GM12878 (cell line): ENCODE measurements at regions of chr14 and their contacts with region 1.

Region 1: GRCh38 chr14:89973234-89973823 is 17.6 kb downstream of the TDP1 start:
- DNase-seq: peak; percentile 4
- ATAC-seq: peak; percentile 87
- H3K4me3 ChIP-seq: no peak overlapping the region
- H3K27ac ChIP-seq: no peak overlapping the region
- H3K4me1 ChIP-seq: no peaks in the 10 kb centered on the region
- H3K27me3 ChIP-seq: no peaks in the 10 kb centered on the region
- CTCF ChIP-seq: peak; percentile 71 to 87 (median 84)
- EP300 ChIP-seq: no peak
- POLR2A ChIP-seq: no peak
- RAD21 ChIP-seq: peak; percentile 59

Region 2: GRCh38 chr14:89954070-89955028 is 19.0 kb before region 1 on chr14 and contains the start of gene EFCAB11:
- CTCF ChIA-PET with region 1: interaction called, 65 read pairs
- POLR2A ChIA-PET with region 1: interaction called, 3 read pairs
- RAD21 ChIA-PET with region 1: interaction called, 4 read pairs
- SMC1A ChIA-PET with region 1: interaction called, 4 read pairs
- in situ Hi-C with region 1: no loop called
- intact Hi-C with region 1: no loop called
- DNase-seq: peak; percentile 93
- ATAC-seq: peak; percentile 92
- H3K4me3 ChIP-seq: peak within 1 kb of the TSS; percentile 65
- H3K27ac ChIP-seq: peak within 1 kb of the TSS; percentile 94
- H3K4me1 ChIP-seq: peaks cover 6% of the 10 kb centered on the region
- H3K27me3 ChIP-seq: no peaks in the 10 kb centered on the region
- CTCF ChIP-seq: peak; percentile 4 to 27 (median 5); a peak in 2 of 6 replicates
- EP300 ChIP-seq: no peak; a peak in 1 of 4 replicates
- POLR2A ChIP-seq: peak; percentile 84
- RAD21 ChIP-seq: no peak
- polyA plus RNA-seq, gene EFCAB11: 35.8 to 37.4 TPM

Region 3: DNA sequence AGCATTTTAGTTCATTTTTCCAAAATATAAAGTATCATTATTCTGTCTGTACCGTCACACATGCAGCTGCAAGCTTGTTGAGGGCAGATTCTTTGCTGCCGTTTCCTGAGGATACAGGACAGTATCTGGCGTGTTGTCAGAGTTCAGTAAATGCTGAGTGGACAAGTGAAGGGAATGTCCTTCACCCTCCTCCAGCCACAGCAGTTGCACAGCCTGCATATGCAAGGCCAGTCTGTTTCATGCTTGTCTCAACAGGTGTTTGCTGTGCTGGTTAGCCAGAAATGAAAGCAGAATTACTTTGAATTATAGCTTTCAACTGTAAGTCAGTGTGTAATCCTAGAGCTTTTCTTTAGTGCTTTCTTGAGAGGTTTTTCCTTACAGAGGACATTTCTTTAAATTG is 18.9 kb after region 1 on chr14:
- CTCF ChIA-PET with region 1: interaction called, 10 read pairs
- POLR2A ChIA-PET with region 1: interaction called, 4 read pairs
- RAD21 ChIA-PET with region 1: no interaction called
- SMC1A ChIA-PET with region 1: interaction called, 3 read pairs
- in situ Hi-C with region 1: no loop called
- intact Hi-C with region 1: no loop called
- DNase-seq: no peak
- ATAC-seq: no peak
- H3K4me3 ChIP-seq: no peak overlapping the region
- H3K27ac ChIP-seq: no peak overlapping the region
- H3K4me1 ChIP-seq: no peaks in the 10 kb centered on the region
- H3K27me3 ChIP-seq: no peaks in the 10 kb centered on the region
- CTCF ChIP-seq: no peak
- EP300 ChIP-seq: no peak
- POLR2A ChIP-seq: no peak
- RAD21 ChIP-seq: no peak

Region 4: GRCh38 chr14:90060312-90060964 is 87.1 kb after region 1 on chr14:
- CTCF ChIA-PET with region 1: interaction called, 6 read pairs
- POLR2A ChIA-PET with region 1: no interaction called
- RAD21 ChIA-PET with region 1: no interaction called
- SMC1A ChIA-PET with region 1: no interaction called
- in situ Hi-C with region 1: no loop called
- intact Hi-C with region 1: loop called (anchors 2 kb)
- DNase-seq: no peak
- ATAC-seq: peak; percentile 83
- H3K4me3 ChIP-seq: peak overlapping the region; percentile 65
- H3K27ac ChIP-seq: no peak overlapping the region
- H3K4me1 ChIP-seq: peaks cover 16% of the 10 kb centered on the region
- H3K27me3 ChIP-seq: peaks cover 19 to 30% of the 10 kb centered on the region in 2 experiments
- CTCF ChIP-seq: peak; percentile 44 to 64 (median 62); a peak in 4 of 6 replicates
- EP300 ChIP-seq: no peak
- POLR2A ChIP-seq: no peak
- RAD21 ChIP-seq: peak; percentile 26; the same call in 1 of the 2 replicates